Caco-2 (cell line): ENCODE measurements at regions of chr18 and their contacts with region 1.

Region 1: DNA sequence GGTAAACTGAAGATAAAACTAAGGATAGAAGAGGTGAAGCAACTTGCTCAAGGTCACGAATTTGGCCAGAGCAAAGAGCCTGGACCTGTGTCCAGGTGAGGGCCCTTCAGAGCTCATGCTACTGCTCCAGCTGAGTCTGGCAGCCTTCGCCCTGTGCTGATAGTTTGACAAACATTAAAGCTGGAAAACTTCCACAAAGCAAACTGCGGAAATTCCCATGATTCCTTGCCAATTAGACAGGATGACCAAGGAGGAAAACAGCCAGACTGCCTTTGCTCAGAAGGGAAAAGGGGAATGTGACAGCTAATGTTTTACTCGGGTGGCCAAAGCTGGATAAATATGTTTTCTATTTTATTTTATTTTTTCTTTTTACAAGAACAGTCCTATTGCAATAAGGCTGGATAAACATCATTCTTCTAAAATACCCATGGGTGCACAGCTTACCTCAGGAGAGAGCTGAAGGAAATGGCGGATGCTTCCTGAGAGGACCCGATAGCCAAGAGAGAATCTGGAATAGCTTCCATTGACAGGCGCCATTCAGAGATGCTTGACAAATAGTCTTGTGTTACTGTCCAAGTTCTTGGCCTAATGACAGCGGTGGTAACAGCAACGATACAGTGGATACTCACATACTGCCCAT is 5.3 kb upstream of the CTAGE1 start:
- DNase-seq: no peak
- H3K4me3 ChIP-seq: no peak overlapping the region
- H3K4me3 Mint-ChIP-seq: no peak overlapping the region
- H3K27ac Mint-ChIP-seq: no peak overlapping the region
- H3K4me1 ChIP-seq: no peaks in the 10 kb centered on the region; the same call in 1 of the 2 replicates
- H3K4me1 Mint-ChIP-seq: no peaks in the 10 kb centered on the region
- H3K27me3 ChIP-seq: no peaks in the 10 kb centered on the region
- H3K27me3 Mint-ChIP-seq: no peaks in the 10 kb centered on the region
- CTCF ChIP-seq: no peak

Region 2: DNA sequence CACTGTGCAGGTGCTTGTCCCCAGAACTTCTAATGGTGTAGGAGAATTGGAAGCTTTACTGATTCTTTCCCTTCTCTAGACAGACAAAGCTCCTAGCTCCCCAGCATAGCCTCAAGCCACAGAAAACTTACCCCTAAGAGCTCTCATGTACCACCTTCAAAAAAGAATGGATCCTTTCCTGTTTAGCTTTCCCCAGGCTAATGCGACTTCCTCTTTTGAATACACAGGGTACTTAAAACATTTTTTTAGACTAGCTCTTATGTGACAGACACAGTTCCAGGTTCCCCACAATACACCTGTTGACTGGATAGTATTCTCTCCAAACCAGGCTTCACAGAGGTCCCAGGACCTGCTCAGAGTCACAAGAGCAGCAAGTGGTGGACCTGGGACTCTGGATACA is 13.6 kb before region 1 on chr18:
- CTCF ChIA-PET with region 1: no interaction called
- POLR2A ChIA-PET with region 1: interaction called, 13 read pairs
- intact Hi-C with region 1: no loop called
- DNase-seq: no peak
- H3K4me3 ChIP-seq: no peak overlapping the region
- H3K4me3 Mint-ChIP-seq: no peak overlapping the region
- H3K27ac Mint-ChIP-seq: no peak overlapping the region
- H3K4me1 ChIP-seq: no peaks in the 10 kb centered on the region
- H3K4me1 Mint-ChIP-seq: no peaks in the 10 kb centered on the region
- H3K27me3 ChIP-seq: no peaks in the 10 kb centered on the region
- H3K27me3 Mint-ChIP-seq: no peaks in the 10 kb centered on the region
- CTCF ChIP-seq: no peak

Region 3: GRCh38 chr18:22494771-22495170 is 71.7 kb after region 1 on chr18:
- CTCF ChIA-PET with region 1: no interaction called
- POLR2A ChIA-PET with region 1: no interaction called
- intact Hi-C with region 1: loop called (anchors 10 kb)
- DNase-seq: no peak
- H3K4me3 ChIP-seq: no peak overlapping the region
- H3K4me3 Mint-ChIP-seq: no peak overlapping the region
- H3K27ac Mint-ChIP-seq: no peak overlapping the region
- H3K4me1 ChIP-seq: peaks cover 35% of the 10 kb centered on the region
- H3K4me1 Mint-ChIP-seq: peaks cover 39% of the 10 kb centered on the region
- H3K27me3 ChIP-seq: no peaks in the 10 kb centered on the region
- H3K27me3 Mint-ChIP-seq: no peaks in the 10 kb centered on the region
- CTCF ChIP-seq: no peak